ENCODE measurements at regions of chr11 and their contacts with region 1.

Region 1: GRCh38 chr11:68584097-68584496 is 100.2 kb upstream of the GAL start:
- DNase-seq: no peak
- H3K4me3 ChIP-seq: no peak overlapping the region
- CTCF ChIP-seq: peak; percentile 32

Region 2: GRCh38 chr11:68342459-68343158 is 241.5 kb before region 1 on chr11:
- CTCF ChIA-PET with region 1: no interaction called
- POLR2A ChIA-PET with region 1: no interaction called
- DNase-seq: no peak
- H3K4me3 ChIP-seq: no peak overlapping the region
- CTCF ChIP-seq: no peak

Region 3: GRCh38 chr11:68569357-68569756 is 14.7 kb before region 1 on chr11:
- CTCF ChIA-PET with region 1: interaction called, 22 read pairs
- POLR2A ChIA-PET with region 1: no interaction called
- DNase-seq: no peak
- H3K4me3 ChIP-seq: no peak overlapping the region
- CTCF ChIP-seq: no peak

Region 4: DNA sequence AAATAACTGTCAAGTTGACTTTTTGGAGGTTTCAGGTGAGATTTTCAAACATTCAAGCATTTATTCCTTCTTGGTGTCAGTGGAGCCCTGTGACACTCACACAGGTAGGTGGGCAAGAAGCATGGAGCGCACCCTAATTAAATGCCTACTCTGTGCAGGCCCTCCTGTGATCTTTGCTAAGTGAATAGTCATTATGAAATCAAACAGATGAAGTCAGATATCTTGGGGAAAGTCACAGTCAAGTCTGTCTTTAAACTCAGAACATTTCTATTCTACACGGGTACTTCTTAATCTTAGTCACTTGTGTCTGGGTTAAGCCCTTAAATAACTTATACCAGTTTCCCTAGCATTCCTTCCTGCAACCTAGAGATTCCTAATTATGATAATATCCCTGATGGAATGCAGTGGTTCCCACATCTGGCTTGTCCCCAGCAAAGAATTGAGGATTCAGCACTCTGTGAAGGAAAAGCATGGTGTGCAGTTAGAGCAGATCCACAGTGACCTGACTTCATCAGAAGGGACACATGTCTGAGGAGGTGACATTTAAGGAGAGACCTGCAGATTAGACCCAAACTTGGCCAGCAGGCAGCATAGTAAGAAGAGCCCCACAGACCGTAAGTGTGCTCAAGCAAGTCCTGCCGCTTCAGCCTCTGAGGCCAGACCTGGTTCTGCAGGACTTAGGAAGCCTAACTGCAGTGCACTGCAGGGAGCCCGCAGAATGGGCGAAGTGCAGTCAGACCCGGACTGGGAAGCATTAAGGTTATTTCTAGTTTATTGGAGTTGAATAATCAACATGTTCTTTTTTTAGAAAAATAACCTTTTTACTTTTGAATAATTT is 14.9 kb after region 1 on chr11:
- CTCF ChIA-PET with region 1: interaction called, 16 read pairs
- POLR2A ChIA-PET with region 1: no interaction called
- DNase-seq: peak; percentile 10
- H3K4me3 ChIP-seq: no peak overlapping the region
- CTCF ChIP-seq: no peak

Region 5: DNA sequence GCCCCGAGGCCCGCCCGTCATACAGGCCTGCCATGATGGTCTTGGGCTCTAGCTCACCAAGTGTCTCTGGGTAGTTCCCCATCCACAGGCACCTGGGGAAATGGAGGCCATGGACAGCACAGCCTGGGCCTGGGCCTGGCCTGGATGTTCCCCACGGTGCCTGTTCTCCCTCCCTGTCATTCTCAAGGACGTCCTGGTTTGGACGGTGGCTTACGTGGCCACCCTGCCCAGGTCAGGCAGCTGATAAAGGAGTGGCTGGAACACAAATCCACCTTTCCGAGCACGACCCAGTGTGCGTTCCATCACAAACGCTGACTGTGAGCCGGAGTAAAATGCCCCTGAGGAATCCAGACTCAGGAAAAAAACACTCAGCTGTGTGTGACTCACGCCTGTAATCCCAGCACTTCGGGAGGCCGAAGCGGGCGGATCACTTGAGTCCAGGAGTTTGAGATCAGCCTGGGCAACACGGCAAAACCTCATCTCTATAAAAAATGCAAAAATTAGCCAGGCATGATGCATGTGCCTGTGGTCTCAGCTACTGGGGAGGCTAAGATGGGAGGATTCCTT is 208.4 kb after region 1 on chr11:
- CTCF ChIA-PET with region 1: no interaction called
- POLR2A ChIA-PET with region 1: no interaction called
- DNase-seq: no peak
- H3K4me3 ChIP-seq: no peak overlapping the region
- CTCF ChIP-seq: no peak